A549 (cell line): ENCODE measurements at regions of chr20 and their contacts with region 1.

Region 1: DNA sequence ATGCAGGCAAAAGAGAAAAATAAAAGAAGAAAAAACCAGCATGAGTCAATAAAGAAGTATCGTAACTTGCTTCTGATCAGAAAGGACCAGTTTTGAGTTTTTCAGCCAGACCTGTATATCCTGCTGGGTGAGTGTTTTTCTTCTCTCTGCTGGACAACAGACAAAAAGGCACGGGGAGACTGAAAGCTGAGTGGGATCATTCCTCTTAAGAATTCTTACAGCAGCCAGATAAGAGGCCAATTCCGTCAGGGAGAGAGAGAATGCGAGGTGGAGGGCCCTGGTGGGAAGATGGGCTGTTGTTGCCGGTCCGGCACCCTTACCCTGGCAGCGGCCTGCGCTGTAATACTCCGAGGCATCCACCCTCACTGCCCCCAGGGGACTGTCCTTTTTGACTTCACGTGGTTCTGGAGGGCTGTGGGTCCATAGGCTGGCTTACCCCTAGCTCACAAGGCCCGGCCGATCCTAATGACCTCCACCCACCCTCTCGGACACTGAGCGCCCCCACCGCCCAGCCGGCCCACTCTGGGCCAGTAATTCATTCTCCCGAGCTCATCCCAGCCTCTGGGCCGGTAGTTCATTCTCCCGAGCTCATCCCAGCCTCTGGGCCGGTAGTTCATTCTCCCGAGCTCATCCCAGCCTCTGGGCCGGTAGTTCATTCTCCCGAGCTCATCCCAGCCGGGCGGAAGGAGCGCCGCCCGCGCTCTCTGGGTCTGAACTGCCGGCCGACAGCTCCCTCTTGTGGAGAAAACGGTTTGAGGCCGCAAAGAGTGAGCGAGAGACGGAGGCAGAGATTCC is 118.3 kb upstream of the SIRPA start:
- DNase-seq: peak; percentile 69 to 89
- ATAC-seq: peak; percentile 95 to 99
- H3K4me3 ChIP-seq: peak overlapping the region; percentile 79
- H3K27ac ChIP-seq: peak overlapping the region; percentile 80 to 91
- H3K4me1 ChIP-seq: peaks cover 20% of the 10 kb centered on the region
- CTCF ChIP-seq: peak; percentile 76
- EP300 ChIP-seq: no peak
- POLR2A ChIP-seq: peak; percentile 39; the same call in 1 of the 2 replicates
- RAD21 ChIP-seq: peak; percentile 71 to 82

Region 2: DNA sequence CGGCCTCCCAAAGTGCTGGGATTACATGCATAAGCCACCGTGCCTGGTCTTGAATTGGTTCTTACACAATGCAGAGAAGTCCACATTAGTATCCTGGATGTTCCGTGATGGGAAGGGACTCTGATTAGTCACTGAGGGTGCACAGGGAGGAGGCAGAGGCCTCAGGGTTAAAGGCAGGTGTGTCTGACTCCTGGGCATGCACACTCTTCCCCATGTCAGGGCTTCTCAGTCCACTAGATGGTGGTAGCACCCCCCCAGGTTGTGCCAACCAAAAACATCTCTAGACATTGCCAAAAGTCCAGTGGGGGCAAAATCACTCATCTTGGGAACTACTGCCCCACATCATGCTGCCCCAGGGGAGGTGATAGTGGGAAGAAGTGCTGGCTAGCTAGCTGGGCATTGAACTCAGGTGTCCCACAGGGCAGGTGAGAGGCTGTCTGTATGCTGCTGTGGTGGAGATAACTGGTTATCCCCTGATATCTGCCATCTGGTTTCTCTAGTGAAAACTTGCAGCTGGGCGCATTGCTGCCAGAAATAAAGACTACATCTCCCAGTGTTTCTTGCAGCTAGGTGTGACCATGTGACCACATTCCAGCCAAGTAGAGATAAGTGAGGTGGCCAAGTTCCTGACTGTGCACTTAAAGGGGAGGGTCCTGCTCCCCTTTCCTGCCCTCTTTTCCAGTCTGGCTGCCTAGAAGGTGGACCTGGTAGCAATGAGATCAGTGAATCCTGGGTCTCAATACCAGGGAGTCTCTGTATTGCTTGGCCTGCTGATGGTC is 301.9 kb before region 1 on chr20:
- CTCF ChIA-PET with region 1: interaction called, 10 read pairs
- POLR2A ChIA-PET with region 1: no interaction called
- DNase-seq: peak in 1 of 2 experiments; percentile 38
- ATAC-seq: peak; percentile 26 to 35; a peak in 3 of 6 replicates
- H3K4me3 ChIP-seq: no peak overlapping the region
- H3K27ac ChIP-seq: no peak overlapping the region
- H3K4me1 ChIP-seq: peaks cover 32% of the 10 kb centered on the region
- CTCF ChIP-seq: peak; percentile 39
- EP300 ChIP-seq: no peak
- POLR2A ChIP-seq: no peak
- RAD21 ChIP-seq: peak; percentile 50 to 68

Region 3: GRCh38 chr20:1764136-1765033 is 12.5 kb before region 1 on chr20:
- CTCF ChIA-PET with region 1: interaction called, 179 read pairs
- POLR2A ChIA-PET with region 1: interaction called, 3 read pairs
- DNase-seq: peak; percentile 80 to 85
- ATAC-seq: peak; percentile 95 to 98
- H3K4me3 ChIP-seq: no peak overlapping the region
- H3K27ac ChIP-seq: no peak overlapping the region
- H3K4me1 ChIP-seq: peaks cover 11% of the 10 kb centered on the region
- CTCF ChIP-seq: peak; percentile 88
- EP300 ChIP-seq: no peak
- POLR2A ChIP-seq: no peak
- RAD21 ChIP-seq: peak; percentile 87 to 91

Region 4: GRCh38 chr20:1810926-1811620 is 34.2 kb after region 1 on chr20:
- CTCF ChIA-PET with region 1: interaction called, 119 read pairs
- POLR2A ChIA-PET with region 1: interaction called, 3 read pairs
- DNase-seq: no peak
- ATAC-seq: peak in 1 of 2 experiments; percentile 6; a peak in 2 of 6 replicates
- H3K4me3 ChIP-seq: no peak overlapping the region
- H3K27ac ChIP-seq: peak overlapping the region; percentile 85 to 87
- H3K4me1 ChIP-seq: peaks cover 74% of the 10 kb centered on the region
- CTCF ChIP-seq: no peak
- EP300 ChIP-seq: no peak
- POLR2A ChIP-seq: no peak
- RAD21 ChIP-seq: no peak

Region 5: GRCh38 chr20:1838556-1839279 is 61.8 kb after region 1 on chr20:
- CTCF ChIA-PET with region 1: interaction called, 11 read pairs
- POLR2A ChIA-PET with region 1: no interaction called
- DNase-seq: no peak
- ATAC-seq: no peak
- H3K4me3 ChIP-seq: no peak overlapping the region
- H3K27ac ChIP-seq: no peak overlapping the region
- H3K4me1 ChIP-seq: 0 out of 3 replicates have a peak, but pooled peaks cover 7% of the 10 kb centered on the region
- CTCF ChIP-seq: no peak
- EP300 ChIP-seq: no peak
- POLR2A ChIP-seq: no peak
- RAD21 ChIP-seq: no peak

Region 6: GRCh38 chr20:1924910-1925861 is 148.3 kb after region 1 on chr20:
- CTCF ChIA-PET with region 1: no interaction called
- POLR2A ChIA-PET with region 1: no interaction called
- DNase-seq: peak in 1 of 2 experiments; percentile 50
- ATAC-seq: no peak
- H3K4me3 ChIP-seq: no peak overlapping the region
- H3K27ac ChIP-seq: no peak overlapping the region
- H3K4me1 ChIP-seq: peaks cover 11% of the 10 kb centered on the region
- CTCF ChIP-seq: no peak
- EP300 ChIP-seq: no peak
- POLR2A ChIP-seq: no peak
- RAD21 ChIP-seq: no peak

Region 7: GRCh38 chr20:1941226-1941625 is 164.3 kb after region 1 on chr20:
- CTCF ChIA-PET with region 1: interaction called, 10 read pairs
- POLR2A ChIA-PET with region 1: no interaction called
- DNase-seq: no peak
- ATAC-seq: no peak
- H3K4me3 ChIP-seq: no peak overlapping the region
- H3K27ac ChIP-seq: no peak overlapping the region
- H3K4me1 ChIP-seq: no peaks in the 10 kb centered on the region
- CTCF ChIP-seq: no peak
- EP300 ChIP-seq: no peak
- POLR2A ChIP-seq: no peak
- RAD21 ChIP-seq: no peak